Activated B cell treated with CpG ODN at 0.5 μM for 24 hours (primary cell): ENCODE measurements at regions of chr1 and their contacts with region 1.

Region 1: DNA sequence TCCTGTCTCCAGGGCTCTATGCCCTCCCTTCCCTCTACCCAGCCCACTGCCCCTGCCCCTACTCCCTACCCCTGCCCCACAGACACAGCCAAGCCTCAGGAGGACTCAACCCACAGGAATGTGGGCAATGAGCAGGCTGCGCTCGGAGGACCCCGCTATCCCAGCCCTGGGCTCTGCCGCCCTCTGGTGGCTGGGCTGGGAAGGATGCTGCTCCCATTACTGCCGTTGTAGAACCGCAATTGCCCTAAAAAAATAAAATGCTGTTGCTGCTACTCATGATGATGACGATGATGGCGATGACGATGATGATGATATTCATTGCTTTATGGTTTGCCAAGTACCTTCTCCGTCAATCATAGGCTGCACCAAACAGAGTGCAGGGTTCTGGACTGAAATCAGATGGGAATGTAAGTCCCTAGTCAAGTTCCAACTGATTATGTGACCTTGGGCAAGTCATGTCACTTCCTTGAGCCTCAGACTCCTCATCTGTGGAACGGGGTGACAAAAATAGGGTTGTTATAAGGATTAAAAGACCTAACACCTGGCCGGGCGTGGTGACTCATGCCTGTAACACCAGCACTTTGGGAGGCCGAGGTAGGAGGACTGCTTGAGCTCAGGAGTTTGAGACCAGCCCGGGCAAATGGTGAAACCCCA is 24.6 kb downstream of the ARHGEF19 start:
- DNase-seq: peak; percentile 69
- ATAC-seq: peak; percentile 89
- H3K4me3 Mint-ChIP-seq: no peak overlapping the region
- H3K27ac Mint-ChIP-seq: no peak overlapping the region
- H3K4me1 Mint-ChIP-seq: no peaks in the 10 kb centered on the region
- H3K27me3 Mint-ChIP-seq: peaks cover 19% of the 10 kb centered on the region
- CTCF ChIP-seq: peak; percentile 44

Region 2: DNA sequence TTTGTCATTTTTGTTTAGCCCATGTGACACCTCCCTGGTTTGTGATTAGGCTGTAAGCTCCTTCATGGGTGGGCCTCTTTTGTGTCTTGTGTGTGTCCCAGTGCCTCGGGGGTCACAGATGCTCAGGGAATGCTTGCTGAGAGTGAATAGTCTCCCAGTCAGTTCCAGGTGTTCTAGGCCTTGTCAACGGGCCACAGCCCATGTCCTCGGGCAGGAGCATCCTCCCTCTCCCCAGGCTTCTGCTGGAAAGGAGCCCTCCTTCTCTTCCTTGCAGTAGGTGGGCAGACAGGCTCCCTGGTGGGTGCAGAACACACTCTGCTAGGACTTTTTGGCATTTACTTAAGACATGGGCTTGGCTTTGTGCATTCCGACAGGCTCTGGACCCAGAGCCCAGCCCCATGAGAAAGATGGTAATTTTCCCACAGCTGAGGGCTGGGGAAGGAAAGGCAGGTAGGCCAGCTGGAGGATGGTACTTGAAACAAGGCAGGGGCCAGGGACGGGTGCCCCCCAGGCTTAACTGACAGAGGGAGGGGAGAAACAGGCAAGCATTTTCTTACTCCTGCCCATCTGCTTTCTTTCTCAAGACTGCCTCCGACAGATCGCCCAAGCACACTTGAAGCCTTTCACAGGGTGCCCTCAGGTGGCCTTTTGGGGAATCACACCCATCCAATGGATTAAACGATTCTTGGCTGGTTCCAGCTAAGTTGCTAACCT is 56.2 kb after region 1 on chr1:
- CTCF ChIA-PET with region 1: interaction called, 3 read pairs
- POLR2A ChIA-PET with region 1: interaction called, 5 read pairs
- intact Hi-C with region 1: loop called (anchors 2 kb)
- DNase-seq: peak; percentile 59
- ATAC-seq: peak; percentile 92
- H3K4me3 Mint-ChIP-seq: no peak overlapping the region
- H3K27ac Mint-ChIP-seq: no peak overlapping the region
- H3K4me1 Mint-ChIP-seq: peaks cover 14% of the 10 kb centered on the region
- H3K27me3 Mint-ChIP-seq: no peaks in the 10 kb centered on the region
- CTCF ChIP-seq: no peak